ENCODE measurements at regions of chr3 and their contacts with region 1.

Region 1: DNA sequence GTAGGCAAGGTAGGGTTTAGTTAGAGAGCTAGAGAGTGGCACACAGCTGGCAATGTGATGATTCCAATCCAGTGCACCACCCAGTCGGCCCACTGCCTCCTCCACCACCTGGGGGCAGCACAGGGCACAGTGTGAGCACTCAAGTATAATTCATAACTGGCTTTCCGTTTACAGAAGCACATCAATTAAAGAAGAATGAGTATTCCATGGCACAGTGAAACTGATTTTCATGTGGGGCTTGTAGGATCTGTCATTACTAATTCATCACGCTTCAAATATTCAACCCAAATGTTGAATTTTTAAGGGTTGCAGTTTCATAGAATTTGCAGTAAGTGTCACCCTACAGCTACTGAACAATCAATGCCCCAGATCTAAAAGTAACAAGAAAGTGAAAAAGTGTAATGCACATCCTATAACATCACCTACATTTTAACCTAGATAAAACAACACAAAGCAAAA is 149.9 kb downstream of the IGSF11 start:
- DNase-seq: peak in 1 of 2 experiments; percentile 66
- H3K4me3 ChIP-seq: no peak overlapping the region
- H3K27ac ChIP-seq: no peak overlapping the region
- H3K4me1 ChIP-seq: no peaks in the 10 kb centered on the region
- H3K27me3 ChIP-seq: no peaks in the 10 kb centered on the region
- CTCF ChIP-seq: peak; percentile 83

Region 2: GRCh38 chr3:117150628-117151027 is 1734.1 kb before region 1 on chr3:
- CTCF ChIA-PET with region 1: no interaction called
- POLR2A ChIA-PET with region 1: no interaction called
- intact Hi-C with region 1: no loop called
- DNase-seq: no peak
- H3K4me3 ChIP-seq: no peak overlapping the region
- H3K27ac ChIP-seq: no peak overlapping the region
- H3K4me1 ChIP-seq: no peaks in the 10 kb centered on the region
- H3K27me3 ChIP-seq: no peaks in the 10 kb centered on the region
- CTCF ChIP-seq: no peak

Region 3: DNA sequence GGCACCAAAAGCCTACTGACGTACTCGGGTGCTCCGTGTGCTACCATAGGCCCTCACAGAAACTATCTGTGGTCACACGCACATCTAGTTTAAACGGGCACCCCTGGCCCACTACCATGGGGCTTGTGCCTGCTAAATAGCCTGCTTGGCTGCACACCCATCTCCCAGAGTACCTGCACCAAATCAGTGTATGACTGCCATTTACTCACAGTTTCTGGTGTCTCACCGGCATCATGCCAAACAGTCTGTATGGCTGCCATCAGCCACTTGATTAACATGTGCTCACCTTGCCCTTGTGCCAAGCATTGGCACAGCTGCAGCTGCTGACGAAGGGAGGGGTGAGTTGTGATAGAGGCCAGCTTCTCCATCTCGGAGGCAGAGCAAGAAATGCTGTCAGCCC is 82.9 kb before region 1 on chr3:
- CTCF ChIA-PET with region 1: no interaction called
- POLR2A ChIA-PET with region 1: no interaction called
- intact Hi-C with region 1: no loop called
- DNase-seq: no peak
- H3K4me3 ChIP-seq: no peak overlapping the region
- H3K27ac ChIP-seq: no peak overlapping the region
- H3K4me1 ChIP-seq: no peaks in the 10 kb centered on the region
- H3K27me3 ChIP-seq: no peaks in the 10 kb centered on the region
- CTCF ChIP-seq: no peak

Region 4: GRCh38 chr3:118850687-118851086 is 34.1 kb before region 1 on chr3:
- CTCF ChIA-PET with region 1: no interaction called
- POLR2A ChIA-PET with region 1: no interaction called
- intact Hi-C with region 1: no loop called
- DNase-seq: no peak
- H3K4me3 ChIP-seq: no peak overlapping the region
- H3K27ac ChIP-seq: no peak overlapping the region
- H3K4me1 ChIP-seq: no peaks in the 10 kb centered on the region
- H3K27me3 ChIP-seq: no peaks in the 10 kb centered on the region
- CTCF ChIP-seq: no peak

Region 5: GRCh38 chr3:119034256-119035013 is 149.7 kb after region 1 on chr3 and contains the start of gene IGSF11:
- CTCF ChIA-PET with region 1: interaction called, 12 read pairs
- POLR2A ChIA-PET with region 1: no interaction called
- intact Hi-C with region 1: loop called (anchors 2 kb)
- DNase-seq: peak in 1 of 2 experiments; percentile 66
- H3K4me3 ChIP-seq: peak within 1 kb of the TSS; percentile 70
- H3K27ac ChIP-seq: no peak within 1 kb of the TSS
- H3K4me1 ChIP-seq: 0 out of 2 replicates have a peak, but pooled peaks cover 4% of the 10 kb centered on the region
- H3K27me3 ChIP-seq: peaks cover 35% of the 10 kb centered on the region
- CTCF ChIP-seq: no peak; the same call in 1 of the 2 replicates
- total RNA-seq, gene IGSF11: not detected in 2 replicates

Region 6: DNA sequence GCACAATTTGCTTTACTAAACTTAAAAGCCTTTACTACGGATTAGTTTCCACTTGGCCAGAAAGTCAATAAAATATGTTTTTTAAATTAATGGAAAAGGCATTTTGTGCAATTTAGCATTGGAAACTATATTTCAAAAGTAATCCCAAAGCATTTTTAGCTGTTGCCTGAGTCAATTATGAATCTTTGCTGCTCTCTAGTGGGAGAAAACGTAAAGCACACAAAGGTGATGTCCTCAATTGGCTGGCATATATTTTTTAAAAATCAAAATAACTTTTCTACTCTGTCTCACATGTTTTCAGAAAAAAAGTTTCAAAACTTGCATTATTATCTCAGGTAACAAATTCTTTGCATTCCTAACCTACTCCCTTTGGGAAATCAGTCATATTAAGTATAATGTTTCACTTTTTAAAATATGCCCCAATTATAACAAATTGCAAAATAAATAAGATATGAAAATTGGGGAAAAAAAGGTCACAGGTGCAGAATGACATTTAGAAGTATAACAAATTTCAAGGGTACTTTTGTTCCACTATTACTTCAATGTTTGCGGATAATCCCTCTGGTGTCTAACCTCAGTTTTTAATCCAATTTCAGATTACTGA is 213.9 kb after region 1 on chr3:
- CTCF ChIA-PET with region 1: interaction called, 23 read pairs
- POLR2A ChIA-PET with region 1: no interaction called
- intact Hi-C with region 1: loop called (anchors 1 kb)
- DNase-seq: peak in 1 of 2 experiments; percentile 14
- H3K4me3 ChIP-seq: no peak overlapping the region
- H3K27ac ChIP-seq: no peak overlapping the region
- H3K4me1 ChIP-seq: no peaks in the 10 kb centered on the region
- H3K27me3 ChIP-seq: no peaks in the 10 kb centered on the region
- CTCF ChIP-seq: peak; percentile 83

Region 7: GRCh38 chr3:119388577-119388976 is 503.8 kb after region 1 on chr3:
- CTCF ChIA-PET with region 1: interaction called, 22 read pairs
- POLR2A ChIA-PET with region 1: no interaction called
- intact Hi-C with region 1: loop called (anchors 1 kb)
- DNase-seq: peak in 1 of 2 experiments; percentile 59
- H3K4me3 ChIP-seq: no peak overlapping the region
- H3K27ac ChIP-seq: no peak overlapping the region
- H3K4me1 ChIP-seq: no peaks in the 10 kb centered on the region
- H3K27me3 ChIP-seq: no peaks in the 10 kb centered on the region
- CTCF ChIP-seq: peak; percentile 69

Region 8: DNA sequence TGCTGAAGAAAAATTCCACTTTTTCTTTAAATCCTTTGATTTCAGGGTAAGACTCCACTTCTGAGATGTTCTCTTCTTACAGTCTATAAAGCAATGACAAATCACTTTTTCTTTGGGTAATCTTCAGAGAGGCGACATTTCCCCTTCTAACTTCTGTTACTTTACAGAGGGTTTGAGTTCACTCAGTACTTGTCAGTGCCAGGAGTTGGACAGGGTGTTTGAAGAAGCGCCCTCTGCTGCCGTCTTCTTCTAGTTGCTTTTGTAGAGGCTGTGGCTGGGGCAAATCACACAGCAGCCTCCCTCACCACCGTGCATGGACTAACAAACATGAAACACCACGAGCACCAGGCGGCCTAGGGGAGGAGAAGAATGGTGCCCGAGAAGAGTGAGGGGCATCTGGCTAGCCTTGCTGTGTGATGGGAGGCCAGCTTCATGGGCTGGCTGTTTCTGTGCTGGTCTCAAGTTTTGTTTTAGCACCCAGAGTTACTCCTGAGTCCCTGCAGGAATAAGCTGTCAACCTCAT is 674.7 kb after region 1 on chr3 and contains the start of gene CD80:
- CTCF ChIA-PET with region 1: no interaction called
- POLR2A ChIA-PET with region 1: no interaction called
- intact Hi-C with region 1: loop called (anchors 1 kb)
- DNase-seq: peak in 1 of 2 experiments; percentile 17
- H3K4me3 ChIP-seq: no peak within 1 kb of the TSS
- H3K27ac ChIP-seq: no peak within 1 kb of the TSS
- H3K4me1 ChIP-seq: no peaks in the 10 kb centered on the region
- H3K27me3 ChIP-seq: no peaks in the 10 kb centered on the region
- CTCF ChIP-seq: peak; percentile 40; the same call in 1 of the 2 replicates
- total RNA-seq, gene CD80: not detected in 2 replicates

Region 9: DNA sequence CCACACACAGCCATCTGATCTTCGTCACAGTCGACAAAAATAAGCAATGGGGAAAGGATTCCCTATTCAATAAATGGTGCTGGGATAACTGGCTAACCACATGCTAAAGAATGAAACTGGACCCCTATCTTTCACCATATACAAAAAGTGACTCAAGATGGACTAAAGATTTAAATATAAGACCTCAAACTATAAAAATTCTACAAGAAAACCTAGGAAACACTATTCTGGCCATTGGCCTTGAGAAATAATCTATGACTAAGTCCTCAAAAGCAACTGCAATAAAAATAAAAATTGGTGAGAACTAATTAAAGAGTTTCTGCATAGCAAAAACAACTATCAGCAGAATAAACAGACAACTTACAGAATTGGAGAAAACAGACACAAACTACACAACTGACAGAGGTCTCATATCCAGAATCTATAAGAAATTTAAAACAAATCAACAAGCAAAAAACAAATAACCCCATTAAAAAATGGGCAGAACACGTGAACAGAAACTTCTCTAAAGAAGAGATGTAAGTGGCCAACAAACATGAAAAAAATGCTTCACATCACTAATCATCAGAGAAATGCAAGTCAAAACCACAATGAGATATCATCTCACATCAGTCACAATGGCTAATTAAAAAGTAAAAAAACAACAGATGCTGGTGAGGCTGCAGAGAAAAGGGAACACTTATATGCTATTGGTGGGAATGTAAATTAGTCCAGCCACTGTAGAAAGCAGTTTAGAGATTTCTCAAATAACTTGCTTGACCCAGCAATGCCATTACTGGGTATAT is 1001.2 kb after region 1 on chr3:
- CTCF ChIA-PET with region 1: no interaction called
- POLR2A ChIA-PET with region 1: no interaction called
- intact Hi-C with region 1: loop called (anchors 10 kb)
- DNase-seq: no peak
- H3K4me3 ChIP-seq: no peak overlapping the region
- H3K27ac ChIP-seq: no peak overlapping the region
- H3K4me1 ChIP-seq: no peaks in the 10 kb centered on the region
- H3K27me3 ChIP-seq: no peaks in the 10 kb centered on the region
- CTCF ChIP-seq: no peak

Region 10: GRCh38 chr3:120182724-120183524 is 1298.1 kb after region 1 on chr3:
- CTCF ChIA-PET with region 1: no interaction called
- POLR2A ChIA-PET with region 1: no interaction called
- intact Hi-C with region 1: loop called (anchors 10 kb)
- DNase-seq: peak; percentile 53 to 57
- H3K4me3 ChIP-seq: no peak overlapping the region
- H3K27ac ChIP-seq: peak overlapping the region; percentile 7; the same call in 1 of the 2 replicates
- H3K4me1 ChIP-seq: peaks cover 38% of the 10 kb centered on the region
- H3K27me3 ChIP-seq: no peaks in the 10 kb centered on the region
- CTCF ChIP-seq: peak; percentile 61